ENCODE measurements at regions of chr18 and their contacts with region 1.

Region 1: GRCh38 chr18:79679111-79679872 is at the start of gene CTDP1:
- DNase-seq: peak; percentile 98
- ATAC-seq: peak; percentile 90
- H3K4me3 Mint-ChIP-seq: peak within 1 kb of the TSS; percentile 97
- H3K27ac Mint-ChIP-seq: peak within 1 kb of the TSS; percentile 98
- H3K4me1 Mint-ChIP-seq: peaks cover 47% of the 10 kb centered on the region
- H3K27me3 Mint-ChIP-seq: no peaks in the 10 kb centered on the region
- CTCF ChIP-seq: no peak
- total RNA-seq, gene CTDP1: 28.1 and 33.8 TPM in 2 replicates

Region 2: GRCh38 chr18:79068937-79069791 is 610.1 kb before region 1 on chr18 and contains the start of gene ATP9B:
- CTCF ChIA-PET with region 1: no interaction called
- POLR2A ChIA-PET with region 1: interaction called, 4 read pairs
- intact Hi-C with region 1: loop called (anchors 1 kb)
- DNase-seq: peak; percentile 99
- ATAC-seq: peak; percentile 84
- H3K4me3 Mint-ChIP-seq: peak within 1 kb of the TSS; percentile 88
- H3K27ac Mint-ChIP-seq: peak within 1 kb of the TSS; percentile 95
- H3K4me1 Mint-ChIP-seq: peaks cover 30% of the 10 kb centered on the region
- H3K27me3 Mint-ChIP-seq: peaks cover 3% of the 10 kb centered on the region
- CTCF ChIP-seq: no peak
- total RNA-seq, gene ATP9B: 41.5 and 49.2 TPM in 2 replicates

Region 3: DNA sequence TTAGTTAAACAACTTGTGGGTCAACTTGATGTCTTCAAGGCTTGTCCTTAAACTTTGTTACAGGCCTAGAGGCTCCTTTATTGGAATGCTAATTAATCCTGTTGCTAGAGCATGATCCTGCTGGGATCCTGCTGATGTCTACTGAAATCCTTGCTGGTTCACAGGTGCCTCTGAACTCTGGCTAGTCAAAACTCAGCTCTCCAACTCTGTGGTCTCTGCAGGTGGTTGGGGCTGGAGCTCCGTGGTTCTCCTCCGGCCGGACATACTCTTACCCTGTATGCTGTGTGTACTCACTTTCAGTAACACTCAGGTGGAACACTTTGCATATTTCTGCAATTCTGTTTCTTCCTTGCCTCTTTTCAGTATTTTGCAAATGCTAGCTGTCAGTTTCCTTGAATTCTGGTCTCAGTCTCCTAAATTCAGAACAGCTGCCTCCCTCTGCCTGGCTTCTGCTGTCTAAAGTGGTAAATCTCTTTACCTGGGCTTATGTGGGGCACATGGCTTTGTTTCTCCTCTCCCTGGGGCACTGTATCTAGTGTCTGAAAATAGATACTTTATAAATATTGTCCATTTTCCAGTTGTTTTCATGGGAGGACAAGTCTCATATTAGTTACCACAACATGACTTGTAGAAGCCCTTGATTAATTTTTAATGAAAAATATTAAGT is 497.1 kb before region 1 on chr18:
- CTCF ChIA-PET with region 1: no interaction called
- POLR2A ChIA-PET with region 1: no interaction called
- intact Hi-C with region 1: no loop called
- DNase-seq: no peak
- ATAC-seq: no peak
- H3K4me3 Mint-ChIP-seq: no peak overlapping the region
- H3K27ac Mint-ChIP-seq: no peak overlapping the region
- H3K4me1 Mint-ChIP-seq: peaks cover 3% of the 10 kb centered on the region
- H3K27me3 Mint-ChIP-seq: no peaks in the 10 kb centered on the region
- CTCF ChIP-seq: no peak

Region 4: GRCh38 chr18:79465392-79465991 is 213.8 kb before region 1 on chr18:
- CTCF ChIA-PET with region 1: no interaction called
- POLR2A ChIA-PET with region 1: no interaction called
- intact Hi-C with region 1: loop called (anchors 2 kb)
- DNase-seq: peak; percentile 69
- ATAC-seq: peak; percentile 80
- H3K4me3 Mint-ChIP-seq: peak overlapping the region; percentile 92
- H3K27ac Mint-ChIP-seq: peak overlapping the region; percentile 97
- H3K4me1 Mint-ChIP-seq: peaks cover 77% of the 10 kb centered on the region
- H3K27me3 Mint-ChIP-seq: no peaks in the 10 kb centered on the region
- CTCF ChIP-seq: no peak

Region 5: DNA sequence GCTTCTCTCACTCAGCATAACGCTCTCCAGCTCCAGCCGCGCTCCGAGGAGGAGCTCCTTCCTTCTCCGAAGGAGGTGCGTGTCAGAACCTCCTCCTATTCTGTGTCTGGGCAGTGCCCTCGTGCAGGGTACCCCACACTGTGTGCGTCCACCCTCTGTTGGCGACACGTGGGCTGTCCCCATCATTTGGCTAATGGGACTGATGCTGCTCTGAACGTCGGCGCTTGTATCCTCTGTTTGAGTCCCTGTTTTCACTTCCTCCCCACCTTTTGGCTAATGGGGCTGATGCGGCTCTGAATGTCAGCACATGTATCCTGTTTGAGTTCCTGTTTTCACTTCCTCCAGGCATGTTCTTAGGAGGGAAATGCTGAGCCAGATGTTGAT is 140.7 kb after region 1 on chr18:
- CTCF ChIA-PET with region 1: no interaction called
- POLR2A ChIA-PET with region 1: no interaction called
- intact Hi-C with region 1: loop called (anchors 2 kb)
- DNase-seq: peak; percentile 42
- ATAC-seq: peak; percentile 94
- H3K4me3 Mint-ChIP-seq: peak overlapping the region; percentile 73
- H3K27ac Mint-ChIP-seq: peak overlapping the region; percentile 84
- H3K4me1 Mint-ChIP-seq: peaks cover 36% of the 10 kb centered on the region
- H3K27me3 Mint-ChIP-seq: peaks cover 3% of the 10 kb centered on the region
- CTCF ChIP-seq: no peak

Region 6: GRCh38 chr18:79988451-79989194 is 309.3 kb after region 1 on chr18 and contains the start of gene TXNL4A:
- CTCF ChIA-PET with region 1: no interaction called
- POLR2A ChIA-PET with region 1: interaction called, 4 read pairs
- intact Hi-C with region 1: loop called (anchors 1 kb)
- DNase-seq: peak; percentile 87
- ATAC-seq: peak; percentile 92
- H3K4me3 Mint-ChIP-seq: peak within 1 kb of the TSS; percentile 91
- H3K27ac Mint-ChIP-seq: peak within 1 kb of the TSS; percentile 92
- H3K4me1 Mint-ChIP-seq: peaks cover 34% of the 10 kb centered on the region
- H3K27me3 Mint-ChIP-seq: no peaks in the 10 kb centered on the region
- CTCF ChIP-seq: no peak
- total RNA-seq, gene TXNL4A: 94.7 and 96.9 TPM in 2 replicates

Region 7: DNA sequence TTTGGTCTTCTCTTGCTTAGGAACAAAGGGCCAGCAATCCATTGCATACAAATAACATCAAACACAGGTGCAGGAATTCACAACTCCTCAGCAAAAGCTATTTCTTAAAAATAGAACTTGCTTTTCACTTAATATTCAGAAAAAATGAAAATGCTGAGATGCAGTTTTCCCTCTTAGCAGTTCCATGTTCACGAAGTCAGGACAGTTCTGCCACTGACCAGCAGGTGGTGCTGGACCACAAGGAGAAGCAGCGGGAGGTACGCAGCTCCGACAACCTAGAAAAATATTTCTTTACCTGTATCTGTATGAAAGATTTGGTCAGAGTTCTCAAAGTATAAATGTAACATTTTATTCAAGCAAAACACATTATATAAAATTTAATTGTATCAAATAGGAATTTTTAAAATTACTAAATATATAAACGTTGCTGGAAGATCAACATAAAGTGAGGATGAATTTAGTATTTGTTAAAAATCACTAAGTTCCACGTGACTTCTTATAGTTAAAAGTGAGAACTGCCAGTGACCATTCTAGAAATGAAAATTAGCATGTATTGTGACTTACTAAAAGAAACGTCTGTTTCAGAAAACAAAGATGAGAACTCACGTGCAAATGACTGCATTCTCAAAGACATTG is 478.5 kb after region 1 on chr18:
- CTCF ChIA-PET with region 1: no interaction called
- POLR2A ChIA-PET with region 1: no interaction called
- intact Hi-C with region 1: loop called (anchors 2 kb)
- DNase-seq: peak; percentile 54
- ATAC-seq: peak; percentile 75
- H3K4me3 Mint-ChIP-seq: no peak overlapping the region
- H3K27ac Mint-ChIP-seq: no peak overlapping the region
- H3K4me1 Mint-ChIP-seq: peaks cover 9% of the 10 kb centered on the region
- H3K27me3 Mint-ChIP-seq: peaks cover 1% of the 10 kb centered on the region
- CTCF ChIP-seq: peak; percentile 92

Measured in activated B cell treated with CpG ODN at 0.5 μM for 24 hours (primary cell).